PC-3 (cell line): ENCODE measurements at regions of chr19 and their contacts with region 1.

Region 1: DNA sequence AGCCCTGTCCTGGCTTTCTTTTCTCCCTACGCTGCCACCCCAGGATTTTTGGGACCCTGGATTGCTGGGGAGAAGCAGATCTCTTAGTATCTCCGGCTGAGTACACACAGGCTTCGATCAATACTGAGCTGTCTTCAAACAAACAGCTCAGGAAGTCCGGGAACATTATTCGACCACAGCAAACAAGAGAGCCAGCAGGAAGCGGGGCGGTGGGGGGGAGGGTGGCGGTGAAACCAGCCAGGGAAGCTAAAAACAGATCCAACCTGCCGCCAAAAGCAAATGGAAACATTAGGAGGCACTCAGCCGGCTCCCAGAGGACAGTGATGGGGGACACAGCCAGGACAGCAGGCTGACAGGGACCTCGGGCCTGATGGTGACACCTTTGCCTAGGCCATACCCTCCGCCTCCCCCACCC is 12.2 kb upstream of the BCAM start:
- DNase-seq: peak; percentile 73
- ATAC-seq: peak; percentile 88
- H3K4me3 ChIP-seq: no peak overlapping the region; the same call in 1 of the 2 replicates
- H3K27ac ChIP-seq: peak overlapping the region; percentile 49
- H3K4me1 ChIP-seq: peaks cover 19% of the 10 kb centered on the region
- H3K27me3 ChIP-seq: no peaks in the 10 kb centered on the region
- CTCF ChIP-seq: no peak

Region 2: DNA sequence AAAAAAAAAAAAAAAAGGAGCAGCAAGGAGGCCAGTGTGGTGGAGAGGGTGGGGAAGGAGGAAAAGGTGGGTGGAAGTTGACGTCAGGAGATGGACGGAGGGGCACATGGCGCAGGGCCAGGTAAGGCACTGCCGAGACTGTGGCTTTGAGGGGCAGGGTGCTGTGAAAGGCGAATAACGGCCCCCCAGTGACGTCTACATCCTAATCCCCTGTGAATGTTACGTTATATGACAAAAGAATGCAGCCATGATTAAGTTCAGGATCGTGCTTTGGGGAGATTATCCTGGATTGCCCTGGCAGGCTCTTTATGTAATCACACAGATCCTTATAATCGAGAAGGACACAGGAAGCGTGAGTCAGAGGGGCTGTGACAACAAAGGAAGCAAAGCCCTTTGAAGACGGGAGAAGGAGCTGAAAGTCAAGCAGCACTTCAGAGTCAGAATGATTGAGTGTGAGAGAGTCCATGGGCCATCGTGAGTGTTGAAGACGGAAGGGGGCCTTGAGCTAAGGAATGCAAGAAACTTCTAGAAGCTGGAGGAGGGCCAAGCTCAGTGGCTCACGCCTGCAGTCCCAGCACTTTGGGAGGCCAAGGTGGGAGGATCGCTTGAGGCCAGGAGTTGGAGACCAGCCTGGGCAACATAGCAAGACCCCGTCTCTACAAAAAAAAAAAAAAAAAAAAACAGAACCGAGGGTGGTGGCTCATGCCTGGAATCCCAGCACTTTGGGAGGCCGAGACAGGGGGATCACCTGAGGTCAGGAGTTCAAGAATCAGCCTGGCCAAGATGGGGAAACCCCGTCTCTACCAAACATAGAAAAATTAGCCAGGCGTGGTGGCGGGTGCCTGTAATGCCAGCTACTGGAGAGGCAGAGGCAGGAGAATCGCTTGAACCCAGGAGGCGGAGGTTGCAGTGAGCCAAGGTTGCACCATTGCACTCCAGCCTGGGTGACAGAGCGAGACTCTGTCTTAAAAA is 111.5 kb before region 1 on chr19:
- CTCF ChIA-PET with region 1: no interaction called
- POLR2A ChIA-PET with region 1: no interaction called
- intact Hi-C with region 1: no loop called
- DNase-seq: peak; percentile 82
- ATAC-seq: peak; percentile 74
- H3K4me3 ChIP-seq: no peak overlapping the region
- H3K27ac ChIP-seq: peak overlapping the region; percentile 78
- H3K4me1 ChIP-seq: peaks cover 23% of the 10 kb centered on the region
- H3K27me3 ChIP-seq: no peaks in the 10 kb centered on the region
- CTCF ChIP-seq: no peak

Region 3: DNA sequence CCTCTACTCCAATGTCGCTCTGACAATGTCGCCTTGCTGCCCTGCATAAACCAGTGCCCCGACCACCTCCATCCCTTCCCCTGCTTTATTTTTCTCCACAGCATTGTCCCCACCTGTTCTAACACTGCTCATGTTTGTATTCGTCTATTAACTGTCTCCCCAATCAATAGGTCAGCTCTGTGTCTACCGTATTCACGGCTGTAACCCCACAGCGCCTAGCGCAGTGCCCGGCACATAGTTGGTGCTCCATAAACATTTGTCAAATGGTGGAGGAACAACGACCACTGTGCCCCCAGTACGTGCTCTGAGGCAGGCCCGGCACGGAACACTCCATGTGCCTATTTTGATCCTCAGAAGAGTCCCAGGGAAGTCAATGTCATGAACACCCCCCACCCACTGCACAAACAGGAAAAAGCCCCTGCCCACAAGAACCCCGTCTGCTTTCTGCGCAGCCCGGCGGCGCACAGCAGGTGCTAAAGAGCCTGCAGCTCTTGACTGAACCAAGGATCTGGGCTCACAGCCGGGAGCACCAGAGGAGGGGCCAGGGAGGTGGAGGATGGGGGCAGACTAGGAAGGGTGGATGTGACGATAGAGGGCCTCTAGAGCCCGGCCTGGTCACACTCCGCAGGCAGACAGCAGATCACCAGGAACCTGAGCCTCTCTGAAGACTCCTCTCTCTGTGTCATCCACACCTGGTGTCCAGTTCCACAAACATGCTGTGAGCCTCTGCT is 99.6 kb before region 1 on chr19:
- CTCF ChIA-PET with region 1: interaction called, 12 read pairs
- POLR2A ChIA-PET with region 1: no interaction called
- intact Hi-C with region 1: no loop called
- DNase-seq: no peak
- ATAC-seq: no peak
- H3K4me3 ChIP-seq: no peak overlapping the region
- H3K27ac ChIP-seq: no peak overlapping the region
- H3K4me1 ChIP-seq: peaks cover 28% of the 10 kb centered on the region
- H3K27me3 ChIP-seq: no peaks in the 10 kb centered on the region
- CTCF ChIP-seq: no peak

Region 4: DNA sequence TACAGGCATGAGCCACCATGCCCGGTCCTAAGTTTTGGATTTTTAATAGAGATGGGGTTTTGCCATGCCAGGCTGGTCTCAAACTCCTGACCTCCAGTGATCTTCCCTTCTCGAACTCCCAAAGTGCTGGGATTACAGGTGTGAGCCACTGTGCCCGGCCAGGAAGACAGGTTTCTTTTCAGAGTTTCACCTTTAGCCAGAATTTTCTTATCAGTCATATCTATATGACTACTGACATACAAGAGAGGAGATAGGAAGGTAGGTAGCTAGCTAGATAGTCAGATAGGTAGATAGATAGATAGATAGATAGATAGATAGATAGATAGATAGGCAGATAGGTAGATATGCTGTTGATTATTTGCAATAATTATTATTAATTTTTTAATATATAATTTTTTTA is 11.5 kb before region 1 on chr19:
- CTCF ChIA-PET with region 1: interaction called, 7 read pairs
- POLR2A ChIA-PET with region 1: interaction called, 32 read pairs
- intact Hi-C with region 1: no loop called
- DNase-seq: no peak
- ATAC-seq: no peak
- H3K4me3 ChIP-seq: no peak overlapping the region
- H3K27ac ChIP-seq: no peak overlapping the region
- H3K4me1 ChIP-seq: no peaks in the 10 kb centered on the region
- H3K27me3 ChIP-seq: no peaks in the 10 kb centered on the region
- CTCF ChIP-seq: no peak